MCF 10A (cell line): ENCODE measurements at regions of chr20 and their contacts with region 1.

Region 1: GRCh38 chr20:31414380-31414779 is 8.4 kb upstream of the DEFB121 start:
- DNase-seq: no peak
- H3K4me3 Mint-ChIP-seq: no peak overlapping the region
- H3K27ac Mint-ChIP-seq: no peak overlapping the region
- H3K4me1 Mint-ChIP-seq: no peaks in the 10 kb centered on the region
- H3K27me3 Mint-ChIP-seq: peaks cover 40% of the 10 kb centered on the region
- CTCF ChIP-seq: no peak

Region 2: DNA sequence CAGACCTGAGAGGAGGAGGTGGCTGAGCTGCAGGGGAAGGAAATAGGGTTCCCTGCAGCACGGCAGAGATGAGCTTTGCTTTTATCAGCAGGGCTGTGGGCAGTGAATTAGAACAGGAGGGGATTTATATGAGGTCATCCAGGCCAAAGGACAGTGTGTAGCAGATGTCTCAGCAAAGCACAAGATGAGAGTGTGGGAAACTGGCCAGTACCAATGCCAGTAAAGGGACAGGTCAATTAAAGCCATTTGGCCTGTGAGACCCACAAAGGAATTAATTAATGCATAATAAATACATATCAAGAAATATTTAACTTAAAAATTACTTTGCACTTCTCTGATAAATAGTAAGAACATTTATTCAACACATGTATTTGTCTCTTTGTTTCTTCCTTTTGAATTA is 23.9 kb before region 1 on chr20 and contains the start of gene DEFB119:
- CTCF ChIA-PET with region 1: interaction called, 17 read pairs
- POLR2A ChIA-PET with region 1: no interaction called
- intact Hi-C with region 1: no loop called
- DNase-seq: no peak
- H3K4me3 Mint-ChIP-seq: no peak within 1 kb of the TSS
- H3K27ac Mint-ChIP-seq: no peak within 1 kb of the TSS
- H3K4me1 Mint-ChIP-seq: no peaks in the 10 kb centered on the region
- H3K27me3 Mint-ChIP-seq: peaks cover 46% of the 10 kb centered on the region
- CTCF ChIP-seq: no peak
- total RNA-seq, gene DEFB119: not detected in 2 replicates

Region 3: GRCh38 chr20:31425797-31426196 is 11.4 kb after region 1 on chr20:
- CTCF ChIA-PET with region 1: interaction called, 32 read pairs
- POLR2A ChIA-PET with region 1: interaction called, 3 read pairs
- intact Hi-C with region 1: no loop called
- DNase-seq: no peak
- H3K4me3 Mint-ChIP-seq: no peak overlapping the region
- H3K27ac Mint-ChIP-seq: no peak overlapping the region
- H3K4me1 Mint-ChIP-seq: no peaks in the 10 kb centered on the region
- H3K27me3 Mint-ChIP-seq: peaks cover 56% of the 10 kb centered on the region
- CTCF ChIP-seq: no peak